CD8-positive, alpha-beta T cell (primary cell): ENCODE measurements at regions of chr9 and their contacts with region 1.

Region 1: GRCh38 chr9:114385412-114386181 is 2.2 kb downstream of the AKNA start:
- DNase-seq: peak; percentile 76 to 98 (median 89)
- ATAC-seq: peak; percentile 70
- H3K4me3 ChIP-seq: peak overlapping the region; percentile 89 to 95
- H3K4me3 Mint-ChIP-seq: peak overlapping the region; percentile 99
- H3K27ac ChIP-seq: peak overlapping the region; percentile 90 to 93
- H3K27ac Mint-ChIP-seq: peak overlapping the region; percentile 95
- H3K4me1 ChIP-seq: peaks cover 72% of the 10 kb centered on the region
- H3K4me1 Mint-ChIP-seq: peaks cover 75% of the 10 kb centered on the region
- H3K27me3 ChIP-seq: no peaks in the 10 kb centered on the region
- H3K27me3 Mint-ChIP-seq: no peaks in the 10 kb centered on the region
- CTCF ChIP-seq: no peak

Region 2: GRCh38 chr9:114339130-114339908 is 46.3 kb before region 1 on chr9:
- CTCF ChIA-PET with region 1: interaction called, 44 read pairs
- POLR2A ChIA-PET with region 1: interaction called, 54 read pairs
- intact Hi-C with region 1: no loop called
- DNase-seq: peak; percentile 27 to 76 (median 52)
- ATAC-seq: peak; percentile 65
- H3K4me3 ChIP-seq: no peak overlapping the region
- H3K4me3 Mint-ChIP-seq: no peak overlapping the region
- H3K27ac ChIP-seq: peak overlapping the region in 1 of 2 experiments; percentile 40
- H3K27ac Mint-ChIP-seq: peak overlapping the region; percentile 45
- H3K4me1 ChIP-seq: no peaks in the 10 kb centered on the region
- H3K4me1 Mint-ChIP-seq: peaks cover 34% of the 10 kb centered on the region
- H3K27me3 ChIP-seq: no peaks in the 10 kb centered on the region
- H3K27me3 Mint-ChIP-seq: no peaks in the 10 kb centered on the region
- CTCF ChIP-seq: peak; percentile 83

Region 3: GRCh38 chr9:114348906-114349482 is 36.6 kb before region 1 on chr9:
- CTCF ChIA-PET with region 1: interaction called, 6 read pairs
- POLR2A ChIA-PET with region 1: interaction called, 54 read pairs
- intact Hi-C with region 1: loop called (anchors 1 kb)
- DNase-seq: peak in 7 of 9 experiments; percentile 48 to 88 (median 70)
- ATAC-seq: peak; percentile 87
- H3K4me3 ChIP-seq: no peak overlapping the region
- H3K4me3 Mint-ChIP-seq: peak overlapping the region; percentile 36
- H3K27ac ChIP-seq: peak overlapping the region; percentile 21 to 62
- H3K27ac Mint-ChIP-seq: peak overlapping the region; percentile 95
- H3K4me1 ChIP-seq: peaks cover 50% of the 10 kb centered on the region
- H3K4me1 Mint-ChIP-seq: peaks cover 63% of the 10 kb centered on the region
- H3K27me3 ChIP-seq: no peaks in the 10 kb centered on the region
- H3K27me3 Mint-ChIP-seq: no peaks in the 10 kb centered on the region
- CTCF ChIP-seq: no peak

Region 4: DNA sequence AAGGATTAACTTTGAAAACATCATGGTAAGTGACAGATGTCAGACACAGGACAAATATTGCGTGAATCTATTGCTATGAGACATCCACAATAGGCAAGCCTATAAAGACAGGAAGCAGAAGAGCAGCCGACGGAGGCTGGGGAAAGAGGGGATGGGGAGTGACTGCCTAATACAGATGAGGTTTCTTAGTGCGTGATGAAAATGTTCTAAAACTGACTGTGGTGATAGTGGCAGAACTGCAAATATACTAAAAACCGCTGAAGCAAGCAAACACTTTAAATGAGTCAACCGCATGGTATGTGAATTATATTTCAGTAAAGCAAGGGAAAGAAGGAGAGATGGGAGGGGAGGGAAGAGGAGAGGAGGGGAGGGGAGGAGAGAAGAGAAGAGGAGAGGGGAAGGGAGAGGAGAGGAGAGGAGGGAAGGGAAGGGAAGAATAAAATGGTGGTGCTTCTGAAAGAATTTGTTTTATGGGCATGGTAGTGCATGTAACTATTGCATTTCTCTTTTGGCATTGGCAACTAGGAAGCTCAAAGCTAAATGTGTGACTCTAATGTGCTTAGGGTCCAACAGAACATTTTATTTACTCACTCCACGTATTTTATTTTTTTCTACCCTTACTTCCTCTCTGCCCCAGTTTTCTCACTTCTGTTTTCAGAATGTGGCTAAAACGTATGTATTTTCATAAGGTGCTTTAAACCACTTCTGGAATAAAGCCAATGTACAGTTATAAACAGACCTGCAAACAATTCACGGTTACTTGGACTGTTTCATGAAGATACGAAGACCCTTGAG is 19.1 kb before region 1 on chr9:
- CTCF ChIA-PET with region 1: interaction called, 67 read pairs
- POLR2A ChIA-PET with region 1: interaction called, 535 read pairs
- intact Hi-C with region 1: no loop called
- DNase-seq: peak in 4 of 9 experiments; percentile 59 to 87 (median 76)
- ATAC-seq: peak; percentile 56
- H3K4me3 ChIP-seq: peak overlapping the region in 1 of 2 experiments; percentile 13
- H3K4me3 Mint-ChIP-seq: peak overlapping the region; percentile 35
- H3K27ac ChIP-seq: peak overlapping the region; percentile 60 to 98
- H3K27ac Mint-ChIP-seq: peak overlapping the region; percentile 92
- H3K4me1 ChIP-seq: peaks cover 96% of the 10 kb centered on the region
- H3K4me1 Mint-ChIP-seq: peaks cover 85% of the 10 kb centered on the region
- H3K27me3 ChIP-seq: no peaks in the 10 kb centered on the region
- H3K27me3 Mint-ChIP-seq: no peaks in the 10 kb centered on the region
- CTCF ChIP-seq: no peak

Region 5: DNA sequence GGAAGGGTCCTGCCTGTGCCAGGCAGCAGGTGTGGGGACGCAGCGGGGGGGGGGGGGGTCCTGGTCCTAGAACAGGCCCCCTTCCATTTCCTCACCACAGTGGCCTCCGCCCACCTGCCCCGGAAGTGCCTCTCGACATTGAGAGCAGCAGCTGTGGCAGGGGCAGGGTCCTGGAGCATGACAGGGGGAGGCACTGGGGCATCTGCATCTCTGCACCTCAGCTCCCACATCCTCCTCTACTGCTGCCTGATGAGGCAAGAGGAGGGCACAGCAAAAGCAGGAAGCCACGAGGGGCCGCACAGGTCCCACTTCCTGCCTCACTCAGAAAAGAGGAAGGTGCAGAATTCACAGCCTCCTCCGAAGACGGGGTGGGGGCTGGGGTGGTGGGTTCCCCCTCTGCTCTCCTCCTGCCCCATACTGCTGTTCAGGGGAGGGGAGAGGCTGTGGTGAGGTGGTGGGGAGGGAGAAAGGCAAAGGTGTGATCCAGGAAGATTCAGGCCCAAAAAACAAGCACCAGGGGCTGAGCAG is 12.6 kb before region 1 on chr9:
- CTCF ChIA-PET with region 1: interaction called, 67 read pairs
- POLR2A ChIA-PET with region 1: interaction called, 535 read pairs
- intact Hi-C with region 1: loop called (anchors 1 kb)
- DNase-seq: peak; percentile 70 to 98 (median 86)
- ATAC-seq: peak; percentile 80
- H3K4me3 ChIP-seq: peak overlapping the region; percentile 28 to 36
- H3K4me3 Mint-ChIP-seq: peak overlapping the region; percentile 83
- H3K27ac ChIP-seq: peak overlapping the region; percentile 72 to 98
- H3K27ac Mint-ChIP-seq: peak overlapping the region; percentile 89
- H3K4me1 ChIP-seq: peaks cover 95% of the 10 kb centered on the region
- H3K4me1 Mint-ChIP-seq: peaks cover 89% of the 10 kb centered on the region
- H3K27me3 ChIP-seq: no peaks in the 10 kb centered on the region
- H3K27me3 Mint-ChIP-seq: no peaks in the 10 kb centered on the region
- CTCF ChIP-seq: no peak